Activated CD4-positive, alpha-beta T cell treated with anti-CD3 and anti-CD28 coated beads for 36 hours (primary cell): ENCODE measurements at regions of chr6 and their contacts with region 1.

Region 1: DNA sequence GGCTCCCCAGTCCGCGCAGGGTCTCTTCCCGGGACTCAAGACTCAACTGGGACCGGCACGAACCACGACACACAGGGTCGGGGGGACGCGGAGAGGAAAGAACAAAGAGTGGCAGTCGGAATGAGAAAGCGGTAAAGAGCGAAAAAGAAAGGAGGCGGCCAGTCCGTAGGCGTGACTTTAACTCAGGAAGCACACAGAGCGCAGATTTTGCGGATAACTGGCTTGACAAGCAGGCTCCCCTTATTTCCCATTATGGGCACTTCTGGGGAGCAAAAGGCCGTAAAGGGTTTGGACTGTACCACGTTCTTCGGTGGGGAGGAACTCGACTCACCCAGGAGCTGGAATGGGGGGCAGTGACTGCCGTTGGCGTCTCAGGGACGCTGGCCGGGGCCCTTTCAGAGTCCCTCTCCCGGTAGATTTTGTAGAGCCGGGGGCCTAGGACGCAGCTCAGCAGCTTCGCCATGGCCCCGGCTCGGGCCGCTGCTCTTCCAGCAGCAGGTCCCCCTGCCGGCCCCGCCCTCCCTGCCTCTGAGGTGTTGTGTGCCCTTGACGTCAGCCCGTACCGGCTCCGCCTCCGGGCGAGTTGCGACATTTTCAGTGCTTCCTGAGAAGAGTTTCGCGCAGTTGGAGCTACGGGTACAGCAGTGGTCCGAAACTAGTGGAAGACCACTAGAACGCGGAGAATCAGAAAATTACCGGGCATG is at the start of gene ABHD16A:
- DNase-seq: peak; percentile 99
- ATAC-seq: peak; percentile 91
- H3K4me3 Mint-ChIP-seq: peak within 1 kb of the TSS; percentile 99
- H3K27ac Mint-ChIP-seq: peak within 1 kb of the TSS; percentile 97
- H3K4me1 Mint-ChIP-seq: peaks cover 24% of the 10 kb centered on the region
- H3K27me3 Mint-ChIP-seq: no peaks in the 10 kb centered on the region
- total RNA-seq, gene ABHD16A: 20.9 to 25.1 TPM

Region 2: DNA sequence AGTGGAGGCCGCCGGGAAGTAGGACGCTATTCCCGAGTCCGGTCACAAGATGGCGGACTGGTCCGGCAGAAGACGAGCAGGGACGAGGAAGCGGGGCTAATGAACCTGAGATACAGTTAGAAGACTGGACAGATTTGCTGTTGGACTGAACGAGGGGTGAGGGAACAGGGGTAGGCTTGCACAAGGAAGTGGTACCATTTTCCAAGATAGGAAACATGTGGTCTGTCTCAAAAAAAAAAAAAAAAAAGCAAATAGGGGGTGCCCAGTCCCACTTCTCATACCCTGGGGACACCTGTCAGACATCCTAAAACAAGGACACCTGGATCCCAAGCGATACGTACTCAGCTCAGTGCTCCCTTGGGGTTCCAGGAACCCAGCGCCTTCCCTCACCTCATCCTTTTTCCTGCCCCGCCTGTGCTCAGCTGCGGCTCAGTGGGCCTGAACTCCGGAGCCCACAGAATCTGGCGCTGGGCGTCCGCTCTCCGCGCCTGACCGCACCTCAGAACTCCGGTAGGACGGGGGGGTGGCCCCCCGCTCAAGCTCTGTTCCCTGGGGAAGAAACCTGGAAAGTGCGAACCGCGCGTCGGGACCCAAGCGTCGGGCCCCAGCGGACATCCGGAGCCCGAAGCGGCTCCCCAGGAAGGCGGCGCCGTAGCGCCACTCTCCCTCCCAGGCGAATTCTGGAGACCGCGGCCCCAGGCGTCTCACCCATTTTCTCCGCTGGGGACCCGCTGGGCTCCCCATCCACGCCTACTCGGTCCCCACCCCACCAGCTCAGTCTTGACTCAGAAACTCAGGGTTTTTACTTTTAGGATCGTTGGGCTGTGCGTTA is 21.9 kb before region 1 on chr6 and contains the start of gene LY6G5C:
- CTCF ChIA-PET with region 1: no interaction called
- POLR2A ChIA-PET with region 1: interaction called, 3 read pairs
- intact Hi-C with region 1: loop called in 1 of 2 experiments (anchors 1 kb)
- DNase-seq: peak; percentile 80
- ATAC-seq: peak; percentile 80
- H3K4me3 Mint-ChIP-seq: peak within 1 kb of the TSS; percentile 66
- H3K27ac Mint-ChIP-seq: peak within 1 kb of the TSS; percentile 49
- H3K4me1 Mint-ChIP-seq: peaks cover 15% of the 10 kb centered on the region
- H3K27me3 Mint-ChIP-seq: no peaks in the 10 kb centered on the region
- total RNA-seq, gene LY6G5C: 1.2 to 1.5 TPM

Region 3: DNA sequence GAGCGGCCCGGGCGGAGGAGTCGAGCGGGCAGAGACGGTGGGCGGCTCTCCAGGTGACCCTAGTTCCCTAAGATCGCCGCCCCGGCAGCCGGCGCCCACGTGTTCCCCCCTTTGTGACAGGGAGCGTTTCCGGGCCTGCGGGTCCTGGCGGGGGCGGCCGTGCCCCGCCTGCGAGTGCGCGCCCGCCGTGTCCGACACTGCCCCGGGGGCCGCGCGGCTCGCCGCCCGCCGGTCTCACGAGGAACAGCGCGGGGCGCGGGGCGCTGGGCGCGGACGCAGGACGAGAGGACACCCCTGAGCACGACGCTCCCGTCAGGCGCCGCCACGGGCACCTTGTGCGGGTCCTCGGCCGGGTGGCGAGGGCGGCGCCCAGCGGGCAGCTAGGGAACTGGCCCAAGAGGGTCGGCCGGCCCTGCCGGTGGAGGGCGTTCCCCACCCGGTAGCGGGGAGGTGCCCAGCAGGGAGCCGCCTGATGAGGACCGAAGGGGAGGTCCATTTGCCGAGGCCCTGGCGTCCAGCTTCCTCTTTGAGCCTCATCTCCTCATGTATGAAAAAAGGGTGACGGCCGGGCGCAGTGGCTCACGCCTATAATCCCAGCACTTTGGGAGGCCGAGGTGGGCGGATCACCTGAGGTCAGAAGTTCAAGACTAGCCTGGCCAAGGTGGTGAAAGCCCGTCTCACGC is 92.8 kb after region 1 on chr6 and contains the start of gene VARS1:
- CTCF ChIA-PET with region 1: interaction called, 3 read pairs
- POLR2A ChIA-PET with region 1: no interaction called
- intact Hi-C with region 1: loop called in 1 of 2 experiments (anchors 1 kb)
- DNase-seq: peak; percentile 92
- ATAC-seq: peak; percentile 82
- H3K4me3 Mint-ChIP-seq: peak within 1 kb of the TSS; percentile 95
- H3K27ac Mint-ChIP-seq: peak within 1 kb of the TSS; percentile 95
- H3K4me1 Mint-ChIP-seq: peaks cover 47% of the 10 kb centered on the region
- H3K27me3 Mint-ChIP-seq: no peaks in the 10 kb centered on the region
- total RNA-seq, gene VARS1: 147 to 169 TPM

Region 4: GRCh38 chr6:31834434-31835198 is 131.6 kb after region 1 on chr6:
- CTCF ChIA-PET with region 1: interaction called, 4 read pairs
- POLR2A ChIA-PET with region 1: no interaction called
- intact Hi-C with region 1: loop called in 1 of 2 experiments (anchors 1 kb)
- DNase-seq: peak; percentile 85
- ATAC-seq: peak; percentile 63
- H3K4me3 Mint-ChIP-seq: peak overlapping the region; percentile 90
- H3K27ac Mint-ChIP-seq: peak overlapping the region; percentile 95
- H3K4me1 Mint-ChIP-seq: peaks cover 40% of the 10 kb centered on the region
- H3K27me3 Mint-ChIP-seq: no peaks in the 10 kb centered on the region

Region 5: DNA sequence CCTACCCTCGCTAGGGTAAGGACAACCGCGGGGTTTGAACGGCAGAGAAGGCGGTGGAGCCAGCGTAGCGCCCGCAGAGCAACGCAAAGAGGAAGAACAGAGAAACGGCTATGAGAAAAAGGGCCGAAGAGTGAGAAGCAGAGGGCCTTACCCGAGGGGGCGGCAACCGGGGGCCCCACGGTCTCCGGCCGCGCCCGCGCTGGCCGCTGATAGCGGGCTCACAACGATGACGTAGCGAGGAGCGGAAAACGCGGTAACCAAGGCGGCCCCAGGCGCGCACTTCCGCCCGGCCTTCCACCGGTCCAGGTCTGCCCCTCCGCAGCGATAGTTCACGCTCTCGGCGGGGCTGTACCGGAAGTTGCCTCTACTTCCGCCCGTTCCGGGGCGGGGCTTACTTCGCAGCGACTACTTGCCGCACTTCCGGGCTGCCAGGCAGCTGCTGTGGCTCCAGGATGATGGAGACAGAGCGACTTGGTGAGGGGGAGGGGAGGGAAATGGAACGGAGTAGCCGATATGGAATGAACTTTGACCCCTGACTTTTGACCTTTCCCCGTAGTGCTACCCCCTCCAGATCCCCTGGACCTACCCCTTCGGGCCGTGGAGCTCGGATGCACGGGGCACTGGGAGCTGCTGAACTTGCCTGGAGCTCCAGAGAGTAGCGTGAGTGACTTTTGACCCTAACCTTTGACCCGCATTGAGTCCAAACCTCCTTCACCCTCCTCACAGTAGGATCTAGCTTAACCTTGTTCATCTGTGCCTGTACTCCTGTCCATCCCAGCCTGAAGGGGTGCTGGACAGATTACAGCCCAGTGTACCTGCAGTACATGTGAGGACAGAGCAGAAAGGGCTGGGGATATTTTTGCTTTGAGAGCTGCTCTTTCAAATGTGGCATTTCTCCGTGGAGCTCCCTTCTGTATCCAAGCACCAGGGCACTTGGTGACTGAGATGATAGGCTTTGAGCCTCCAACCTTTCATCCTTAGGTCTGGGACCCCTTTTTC is 256.1 kb after region 1 on chr6 and contains the starts of genes NELFE and SKIC2:
- CTCF ChIA-PET with region 1: no interaction called
- POLR2A ChIA-PET with region 1: no interaction called
- intact Hi-C with region 1: loop called in 1 of 2 experiments (anchors 1 kb)
- DNase-seq: peak; percentile 99
- ATAC-seq: peak; percentile 99
- H3K4me3 Mint-ChIP-seq: peak within 1 kb of the TSS; percentile 95
- H3K27ac Mint-ChIP-seq: peak within 1 kb of the TSS; percentile 98
- H3K4me1 Mint-ChIP-seq: peaks cover 34% of the 10 kb centered on the region
- H3K27me3 Mint-ChIP-seq: no peaks in the 10 kb centered on the region
- total RNA-seq, gene NELFE: 74.3 to 95.1 TPM
- total RNA-seq, gene SKIC2: 90.2 to 104 TPM